ENCODE measurements at regions of chr2 and their contacts with region 1.

Region 1: GRCh38 chr2:219245148-219245898 is at the starts of genes GLB1L and STK16:
- DNase-seq: peak; percentile 76 to 95 (median 85)
- ATAC-seq: peak; percentile 80
- H3K4me3 ChIP-seq: peak within 1 kb of the TSS; percentile 92
- H3K4me3 Mint-ChIP-seq: peak within 1 kb of the TSS; percentile 82 to 100 (median 93)
- H3K27ac ChIP-seq: peak within 1 kb of the TSS; percentile 89
- H3K27ac Mint-ChIP-seq: peak within 1 kb of the TSS; percentile 88 to 99 (median 97)
- H3K4me1 ChIP-seq: peaks cover 52 to 53% of the 10 kb centered on the region in 2 donors
- H3K4me1 Mint-ChIP-seq: peaks cover 26 to 73% (median 59%) of the 10 kb centered on the region in 7 donors
- H3K27me3 ChIP-seq: no peaks in the 10 kb centered on the region
- H3K27me3 Mint-ChIP-seq: peaks cover 0 to 2% (median 0%) of the 10 kb centered on the region in 5 donors
- total RNA-seq, gene GLB1L: 1.9 to 4.5 (median 2.7) TPM
- total RNA-seq, gene STK16: 17.4 to 35.0 (median 21.8) TPM

Region 2: GRCh38 chr2:219218732-219219701 is 26.3 kb before region 1 on chr2 and contains the start of gene ABCB6:
- CTCF ChIA-PET with region 1: interaction called, 7 read pairs
- POLR2A ChIA-PET with region 1: interaction called, 28 read pairs
- intact Hi-C with region 1: no loop called
- DNase-seq: peak; percentile 72 to 90 (median 85)
- ATAC-seq: peak; percentile 92
- H3K4me3 ChIP-seq: peak within 1 kb of the TSS; percentile 60
- H3K4me3 Mint-ChIP-seq: peak within 1 kb of the TSS; percentile 78 to 89 (median 82)
- H3K27ac ChIP-seq: peak within 1 kb of the TSS; percentile 65
- H3K27ac Mint-ChIP-seq: peak within 1 kb of the TSS; percentile 61 to 86 (median 79)
- H3K4me1 ChIP-seq: peaks cover 13 to 14% of the 10 kb centered on the region in 2 donors
- H3K4me1 Mint-ChIP-seq: peaks cover 0 to 29% (median 24%) of the 10 kb centered on the region in 7 donors
- H3K27me3 ChIP-seq: no peaks in the 10 kb centered on the region
- H3K27me3 Mint-ChIP-seq: no peaks in the 10 kb centered on the region
- total RNA-seq, gene ABCB6: 4.1 to 30.2 (median 8.3) TPM

Region 3: GRCh38 chr2:219229305-219230058 is 15.8 kb before region 1 on chr2 and contains the starts of genes ANKZF1 and ATG9A:
- CTCF ChIA-PET with region 1: interaction called, 14 read pairs
- POLR2A ChIA-PET with region 1: interaction called, 575 read pairs
- intact Hi-C with region 1: loop called (anchors 1 kb)
- DNase-seq: peak; percentile 92 to 99 (median 99)
- ATAC-seq: peak; percentile 98
- H3K4me3 ChIP-seq: peak within 1 kb of the TSS; percentile 80
- H3K4me3 Mint-ChIP-seq: peak within 1 kb of the TSS; percentile 94 to 100 (median 98)
- H3K27ac ChIP-seq: peak within 1 kb of the TSS; percentile 90
- H3K27ac Mint-ChIP-seq: peak within 1 kb of the TSS; percentile 96 to 100 (median 96)
- H3K4me1 ChIP-seq: peaks cover 17 to 22% of the 10 kb centered on the region in 2 donors
- H3K4me1 Mint-ChIP-seq: peaks cover 33 to 83% (median 69%) of the 10 kb centered on the region in 7 donors
- H3K27me3 ChIP-seq: no peaks in the 10 kb centered on the region
- H3K27me3 Mint-ChIP-seq: no peaks in the 10 kb centered on the region
- total RNA-seq, gene ANKZF1: 117 to 287 (median 169) TPM
- total RNA-seq, gene ATG9A: 52.6 to 66.0 (median 60.9) TPM

Region 4: GRCh38 chr2:219261024-219261855 is 15.9 kb after region 1 on chr2:
- CTCF ChIA-PET with region 1: interaction called, 15 read pairs
- POLR2A ChIA-PET with region 1: interaction called, 575 read pairs
- intact Hi-C with region 1: no loop called
- DNase-seq: no peak
- ATAC-seq: no peak
- H3K4me3 ChIP-seq: no peak overlapping the region
- H3K4me3 Mint-ChIP-seq: no peak overlapping the region
- H3K27ac ChIP-seq: no peak overlapping the region
- H3K27ac Mint-ChIP-seq: no peak overlapping the region
- H3K4me1 ChIP-seq: no peaks in the 10 kb centered on the region
- H3K4me1 Mint-ChIP-seq: peaks cover 0 to 4% (median 2%) of the 10 kb centered on the region in 7 donors
- H3K27me3 ChIP-seq: no peaks in the 10 kb centered on the region
- H3K27me3 Mint-ChIP-seq: peaks cover 0 to 25% (median 0%) of the 10 kb centered on the region in 5 donors

Region 5: GRCh38 chr2:219893541-219893940 is 648.2 kb after region 1 on chr2:
- CTCF ChIA-PET with region 1: no interaction called
- POLR2A ChIA-PET with region 1: no interaction called
- intact Hi-C with region 1: no loop called
- DNase-seq: no peak
- ATAC-seq: no peak
- H3K4me3 ChIP-seq: no peak overlapping the region
- H3K4me3 Mint-ChIP-seq: no peak overlapping the region
- H3K27ac ChIP-seq: no peak overlapping the region
- H3K27ac Mint-ChIP-seq: no peak overlapping the region
- H3K4me1 ChIP-seq: no peaks in the 10 kb centered on the region
- H3K4me1 Mint-ChIP-seq: no peaks in the 10 kb centered on the region
- H3K27me3 ChIP-seq: no peaks in the 10 kb centered on the region
- H3K27me3 Mint-ChIP-seq: peaks cover 0 to 19% (median 14%) of the 10 kb centered on the region in 5 donors

Region 6: GRCh38 chr2:220499225-220499624 is 1253.9 kb after region 1 on chr2:
- CTCF ChIA-PET with region 1: no interaction called
- POLR2A ChIA-PET with region 1: no interaction called
- intact Hi-C with region 1: no loop called
- DNase-seq: no peak
- ATAC-seq: no peak
- H3K4me3 ChIP-seq: no peak overlapping the region
- H3K4me3 Mint-ChIP-seq: no peak overlapping the region
- H3K27ac ChIP-seq: no peak overlapping the region
- H3K27ac Mint-ChIP-seq: no peak overlapping the region
- H3K4me1 ChIP-seq: no peaks in the 10 kb centered on the region
- H3K4me1 Mint-ChIP-seq: no peaks in the 10 kb centered on the region
- H3K27me3 ChIP-seq: no peaks in the 10 kb centered on the region
- H3K27me3 Mint-ChIP-seq: no peaks in the 10 kb centered on the region

Measured in naive thymus-derived CD4-positive, alpha-beta T cell (primary cell).